Activated T-helper 1 cell treated with anti-CD3 and anti-CD28 coated beads, Interleukin-12 subunit alpha, Interleukin-12 subunit beta, Interleukin-2, Interleukin-4 antibody, amounts not matched to agents 30 ng/mL and 10 ng/mL and 1 ng/mL, durations not matched to agents 14 hours and 24 hours and 36 hours (primary cell): ENCODE measurements at regions of chr4 and their contacts with region 1.

Region 1: DNA sequence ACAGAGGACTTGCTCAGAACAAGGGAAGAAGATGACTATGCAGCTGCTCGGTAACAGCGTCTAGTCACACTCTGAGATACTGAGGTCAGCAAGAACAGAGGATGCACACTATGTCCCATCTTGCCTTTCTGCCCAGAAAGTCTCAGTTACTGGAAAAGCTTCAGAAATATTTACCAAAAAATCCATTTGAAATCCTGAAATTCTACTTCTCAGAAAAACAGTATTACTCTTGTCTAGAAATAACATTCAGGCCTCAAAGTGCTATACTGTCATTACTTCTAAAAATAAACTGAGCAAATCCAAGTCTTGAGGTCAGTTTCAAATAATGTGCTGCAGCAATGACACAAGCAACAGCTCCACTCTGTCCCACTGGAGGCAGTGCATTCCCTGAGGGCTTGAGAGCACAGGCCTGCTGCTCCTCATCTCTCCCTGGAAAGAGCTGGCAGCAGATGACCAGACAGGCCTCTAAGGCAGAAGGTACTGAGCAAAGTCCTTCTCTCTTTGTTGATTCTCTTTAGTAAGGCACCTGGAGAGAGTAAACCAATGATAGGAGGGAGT is 76.9 kb downstream of the CAMK2D start:
- DNase-seq: no peak
- H3K4me3 Mint-ChIP-seq: peak overlapping the region; percentile 58
- H3K27ac Mint-ChIP-seq: peak overlapping the region; percentile 90
- H3K4me1 Mint-ChIP-seq: peaks cover 70% of the 10 kb centered on the region
- H3K27me3 Mint-ChIP-seq: no peaks in the 10 kb centered on the region

Region 2: DNA sequence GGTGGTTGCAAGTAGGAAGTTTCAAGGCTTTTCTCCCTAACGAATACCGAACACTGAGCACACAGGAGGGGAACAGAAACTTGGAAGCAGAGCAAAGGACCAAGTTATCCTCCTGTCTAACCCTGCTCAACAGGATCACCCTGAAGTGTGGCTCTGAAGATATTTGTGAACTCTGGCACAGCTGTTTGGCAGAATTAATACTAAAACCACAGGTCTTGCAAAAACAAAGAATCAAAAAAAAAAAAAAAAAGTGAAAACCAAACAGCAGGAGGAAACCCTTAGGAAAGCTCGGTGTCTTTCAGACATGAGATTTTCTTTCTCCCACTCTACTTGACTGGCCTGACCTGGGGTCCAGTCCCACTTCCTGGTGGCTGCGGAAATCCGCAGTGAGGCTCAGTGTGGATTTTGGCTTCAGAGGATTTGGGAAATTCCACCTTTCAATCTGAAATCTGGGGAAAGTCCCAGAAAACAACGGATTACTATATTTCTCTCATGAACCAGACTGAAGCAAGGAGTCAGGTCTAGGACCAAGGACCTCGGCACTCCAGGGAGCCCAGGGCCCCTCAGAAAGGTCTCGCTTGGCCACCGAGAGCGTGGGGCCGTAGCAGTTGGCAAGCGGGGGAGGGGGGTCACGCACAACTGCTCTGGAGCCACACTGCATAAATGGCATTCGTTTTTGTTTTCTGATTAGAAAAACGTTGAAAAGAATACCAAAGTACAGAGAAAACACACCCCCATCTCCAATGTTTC is 1399.8 kb before region 1 on chr4:
- intact Hi-C with region 1: loop called (anchors 5 kb)
- DNase-seq: no peak
- H3K4me3 Mint-ChIP-seq: peak overlapping the region; percentile 87
- H3K27ac Mint-ChIP-seq: peak overlapping the region; percentile 95
- H3K4me1 Mint-ChIP-seq: peaks cover 91% of the 10 kb centered on the region
- H3K27me3 Mint-ChIP-seq: no peaks in the 10 kb centered on the region

Region 3: GRCh38 chr4:113394730-113395530 is 289.7 kb before region 1 on chr4:
- intact Hi-C with region 1: loop called (anchors 2 kb)
- DNase-seq: peak; percentile 48
- H3K4me3 Mint-ChIP-seq: no peak overlapping the region
- H3K27ac Mint-ChIP-seq: no peak overlapping the region
- H3K4me1 Mint-ChIP-seq: no peaks in the 10 kb centered on the region
- H3K27me3 Mint-ChIP-seq: peaks cover 2% of the 10 kb centered on the region

Region 4: GRCh38 chr4:113539408-113539807 is 145.2 kb before region 1 on chr4:
- intact Hi-C with region 1: loop called (anchors 1 kb)
- DNase-seq: no peak
- H3K4me3 Mint-ChIP-seq: peak overlapping the region; percentile 29
- H3K27ac Mint-ChIP-seq: peak overlapping the region; percentile 80
- H3K4me1 Mint-ChIP-seq: peaks cover 39% of the 10 kb centered on the region
- H3K27me3 Mint-ChIP-seq: no peaks in the 10 kb centered on the region

Region 5: GRCh38 chr4:113625902-113626301 is 58.7 kb before region 1 on chr4:
- intact Hi-C with region 1: loop called (anchors 1 kb)
- DNase-seq: no peak
- H3K4me3 Mint-ChIP-seq: no peak overlapping the region
- H3K27ac Mint-ChIP-seq: peak overlapping the region; percentile 25
- H3K4me1 Mint-ChIP-seq: peaks cover 40% of the 10 kb centered on the region
- H3K27me3 Mint-ChIP-seq: no peaks in the 10 kb centered on the region

Region 6: DNA sequence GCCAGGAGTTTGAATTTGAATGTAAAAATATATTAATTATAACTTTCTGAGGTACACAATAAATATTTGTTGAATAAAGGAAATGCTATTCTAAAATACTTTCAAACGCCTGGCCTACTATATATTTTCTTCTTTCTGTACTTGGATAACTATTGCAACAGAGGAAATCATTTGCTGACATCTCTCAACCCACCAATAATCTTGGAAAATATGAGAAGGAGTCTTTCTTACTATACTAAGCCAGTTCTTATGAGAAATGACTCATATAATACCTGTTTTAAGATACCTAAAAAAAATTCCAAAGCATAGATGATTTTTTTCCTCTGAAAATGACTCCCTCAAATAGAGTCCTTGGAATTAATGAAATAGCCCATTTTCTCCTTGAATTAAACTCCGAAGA is 12.8 kb after region 1 on chr4:
- intact Hi-C with region 1: loop called (anchors 1 kb)
- DNase-seq: no peak
- H3K4me3 Mint-ChIP-seq: no peak overlapping the region
- H3K27ac Mint-ChIP-seq: peak overlapping the region; percentile 74
- H3K4me1 Mint-ChIP-seq: peaks cover 18% of the 10 kb centered on the region
- H3K27me3 Mint-ChIP-seq: no peaks in the 10 kb centered on the region

Region 7: DNA sequence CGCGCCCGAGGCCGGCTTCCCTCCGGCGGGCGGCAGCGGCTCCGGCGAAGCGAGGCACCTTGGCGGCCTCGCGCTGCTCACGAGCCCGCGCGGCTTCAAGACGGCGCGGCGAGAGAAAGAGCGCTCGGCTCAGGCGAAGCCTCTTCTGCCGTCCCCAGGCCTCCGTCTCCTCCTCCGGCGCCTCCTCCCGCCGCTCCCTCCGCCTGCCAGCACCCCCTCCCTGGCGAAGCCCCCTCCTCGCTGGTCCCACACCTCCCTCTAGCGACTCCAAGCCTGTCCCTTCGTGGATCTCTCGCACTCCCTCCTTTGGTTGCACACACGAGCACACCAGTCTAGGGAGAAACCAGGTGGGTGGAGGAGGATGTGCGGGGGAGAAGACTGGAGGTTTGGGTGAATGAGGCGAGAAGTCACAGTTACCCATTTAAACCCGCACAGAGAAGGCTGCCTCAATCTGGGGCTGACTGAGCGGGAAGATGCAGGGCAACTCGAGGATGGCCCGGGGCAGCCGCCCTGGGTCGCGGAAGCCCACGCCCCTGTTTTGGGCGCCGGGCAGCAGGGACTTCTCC is 77.1 kb after region 1 on chr4 and contains the start of gene CAMK2D:
- intact Hi-C with region 1: loop called (anchors 1 kb)
- DNase-seq: peak; percentile 79
- H3K4me3 Mint-ChIP-seq: peak within 1 kb of the TSS; percentile 100
- H3K27ac Mint-ChIP-seq: peak within 1 kb of the TSS; percentile 100
- H3K4me1 Mint-ChIP-seq: peaks cover 44% of the 10 kb centered on the region
- H3K27me3 Mint-ChIP-seq: no peaks in the 10 kb centered on the region
- total RNA-seq, gene CAMK2D: 67.7 and 73.5 TPM in 2 replicates